Astrocyte of the cerebellum (primary cell): ENCODE measurements at regions of chr3 and their contacts with region 1.

Region 1: GRCh38 chr3:189282741-189283140 is 111.0 kb downstream of the TPRG1 start:
- DNase-seq: no peak
- H3K4me3 ChIP-seq: no peak overlapping the region
- CTCF ChIP-seq: no peak

Region 2: DNA sequence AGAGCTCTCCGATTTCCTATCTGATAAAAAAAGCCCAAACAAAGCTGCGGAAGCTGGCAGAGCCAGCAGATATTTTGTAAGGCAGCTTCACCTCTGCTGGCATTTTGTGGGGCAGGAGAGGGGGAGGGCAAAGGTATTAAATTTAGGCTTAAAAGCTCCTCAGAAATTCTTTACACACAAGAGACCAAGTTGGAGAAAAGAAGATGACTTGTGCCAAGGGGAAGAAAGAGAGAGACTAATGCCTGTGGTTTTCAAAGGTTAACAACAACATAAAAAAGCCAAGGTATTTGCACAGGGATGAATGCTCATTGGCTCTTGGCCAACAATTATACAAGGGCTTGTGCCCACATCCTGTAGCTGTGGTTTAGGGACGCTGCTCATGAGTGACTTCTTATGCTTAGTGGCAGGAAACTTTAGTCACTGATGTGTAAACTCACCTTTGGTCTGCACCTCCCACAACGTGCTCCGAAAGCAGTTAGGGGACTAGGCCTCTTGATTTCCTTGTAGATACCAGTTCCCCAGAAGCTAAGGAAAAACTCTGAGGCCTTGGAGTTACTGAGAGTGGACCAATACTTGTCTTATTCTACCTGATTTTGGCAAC is 41.9 kb after region 1 on chr3:
- in situ Hi-C with region 1: no loop called
- DNase-seq: peak; percentile 84
- H3K4me3 ChIP-seq: no peak overlapping the region
- CTCF ChIP-seq: no peak

Region 3: DNA sequence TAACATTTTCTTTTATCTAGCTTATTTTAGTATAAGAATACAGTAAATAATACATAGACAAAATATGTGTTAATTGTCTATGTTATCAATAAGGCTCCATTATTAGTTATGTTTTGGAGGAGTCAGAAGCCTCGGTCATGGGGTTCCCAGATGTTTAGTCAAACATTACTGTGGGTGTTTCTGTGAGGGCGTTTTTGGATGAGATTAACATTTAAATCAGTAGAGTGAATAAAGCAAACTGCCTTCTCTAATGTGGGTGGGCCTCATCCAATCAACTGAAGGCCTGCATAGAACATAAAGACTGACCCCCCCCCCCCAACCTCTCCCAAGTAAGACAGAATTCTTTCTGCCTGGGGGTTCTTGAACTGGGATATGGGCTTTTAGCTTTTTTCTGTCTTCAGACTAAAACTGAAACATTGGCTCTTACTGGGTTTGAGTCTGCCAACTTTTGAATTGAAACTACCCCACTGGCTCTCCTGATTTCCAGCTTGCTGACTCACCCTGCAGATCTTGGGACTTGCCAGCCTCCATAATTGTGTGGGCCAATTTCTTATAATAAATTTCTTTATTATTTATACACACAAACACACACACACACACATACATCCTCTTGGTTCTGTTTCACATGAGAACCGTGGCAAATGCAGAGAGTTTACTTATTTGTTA is 81.0 kb after region 1 on chr3:
- in situ Hi-C with region 1: no loop called
- DNase-seq: peak; percentile 51
- H3K4me3 ChIP-seq: no peak overlapping the region
- CTCF ChIP-seq: no peak

Region 4: GRCh38 chr3:189941679-189942078 is 658.9 kb after region 1 on chr3:
- in situ Hi-C with region 1: no loop called
- DNase-seq: peak; percentile 27
- H3K4me3 ChIP-seq: no peak overlapping the region
- CTCF ChIP-seq: no peak

Region 5: GRCh38 chr3:189954733-189955132 is 672.0 kb after region 1 on chr3:
- in situ Hi-C with region 1: loop called (anchors 5 kb)
- DNase-seq: no peak
- H3K4me3 ChIP-seq: no peak overlapping the region
- CTCF ChIP-seq: no peak